ENCODE measurements at regions of chr18 and their contacts with region 1.

Region 1: DNA sequence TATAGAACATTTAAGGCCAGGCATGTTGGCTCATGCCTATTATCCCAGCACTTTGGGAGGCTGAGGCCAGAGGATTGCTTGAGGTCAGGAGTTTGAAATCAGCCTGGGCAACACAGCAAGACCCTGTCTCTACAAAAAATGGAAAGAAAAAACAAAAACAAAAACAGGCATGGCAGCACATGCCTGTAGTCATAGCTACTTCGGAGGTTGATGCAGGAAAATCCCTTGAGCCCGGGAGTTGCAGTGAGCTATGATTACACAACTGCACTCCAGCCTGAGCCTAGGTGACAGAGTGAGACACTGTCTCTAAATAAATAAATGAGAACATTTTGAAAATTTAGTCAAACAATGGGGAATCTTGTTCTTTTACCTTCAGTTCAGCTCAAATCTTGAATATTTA is 12.1 kb upstream of the YES1 start:
- DNase-seq: no peak

Region 2: GRCh38 chr18:744832-745597 is 79.2 kb before region 1 on chr18:
- in situ Hi-C with region 1: loop called (anchors 5 kb)
- DNase-seq: no peak

Region 3: GRCh38 chr18:892316-892715 is 68.1 kb after region 1 on chr18:
- in situ Hi-C with region 1: no loop called
- DNase-seq: no peak